Naive thymus-derived CD4-positive, alpha-beta T cell (primary cell): ENCODE measurements at regions of chr10 and their contacts with region 1.

Region 1: GRCh38 chr10:13099666-13100348 is at the start of gene OPTN:
- DNase-seq: peak; percentile 61 to 85 (median 80)
- ATAC-seq: peak; percentile 90
- H3K4me3 ChIP-seq: peak within 1 kb of the TSS; percentile 82
- H3K4me3 Mint-ChIP-seq: peak within 1 kb of the TSS; percentile 83 to 97 (median 96)
- H3K27ac ChIP-seq: peak within 1 kb of the TSS; percentile 92
- H3K27ac Mint-ChIP-seq: peak within 1 kb of the TSS; percentile 88 to 98 (median 94)
- H3K4me1 ChIP-seq: peaks cover 6 to 21% of the 10 kb centered on the region in 2 donors
- H3K4me1 Mint-ChIP-seq: peaks cover 28 to 52% (median 49%) of the 10 kb centered on the region in 7 donors
- H3K27me3 ChIP-seq: no peaks in the 10 kb centered on the region
- H3K27me3 Mint-ChIP-seq: no peaks in the 10 kb centered on the region
- total RNA-seq, gene OPTN: 59.3 to 146 (median 60.0) TPM

Region 2: GRCh38 chr10:12121673-12122072 is 978.1 kb before region 1 on chr10:
- CTCF ChIA-PET with region 1: no interaction called
- POLR2A ChIA-PET with region 1: no interaction called
- intact Hi-C with region 1: loop called in 1 of 2 experiments (anchors 2 kb)
- DNase-seq: no peak
- ATAC-seq: no peak
- H3K4me3 ChIP-seq: no peak overlapping the region
- H3K4me3 Mint-ChIP-seq: no peak overlapping the region
- H3K27ac ChIP-seq: no peak overlapping the region
- H3K27ac Mint-ChIP-seq: peak overlapping the region in 1 of 9 donors; percentile 86
- H3K4me1 ChIP-seq: no peaks in the 10 kb centered on the region
- H3K4me1 Mint-ChIP-seq: peaks cover 1 to 31% (median 7%) of the 10 kb centered on the region in 7 donors
- H3K27me3 ChIP-seq: no peaks in the 10 kb centered on the region
- H3K27me3 Mint-ChIP-seq: no peaks in the 10 kb centered on the region

Region 3: GRCh38 chr10:12264204-12264940 is 835.4 kb before region 1 on chr10:
- CTCF ChIA-PET with region 1: no interaction called
- POLR2A ChIA-PET with region 1: no interaction called
- intact Hi-C with region 1: loop called (anchors 2 to 10 kb)
- DNase-seq: peak; percentile 45 to 75 (median 67)
- ATAC-seq: peak; percentile 73
- H3K4me3 ChIP-seq: peak overlapping the region; percentile 45
- H3K4me3 Mint-ChIP-seq: peak overlapping the region; percentile 58 to 81 (median 72)
- H3K27ac ChIP-seq: no peak overlapping the region
- H3K27ac Mint-ChIP-seq: peak overlapping the region in 7 of 9 donors; percentile 10 to 87 (median 51)
- H3K4me1 ChIP-seq: no peaks in the 10 kb centered on the region
- H3K4me1 Mint-ChIP-seq: peaks cover 0 to 26% (median 5%) of the 10 kb centered on the region in 7 donors
- H3K27me3 ChIP-seq: no peaks in the 10 kb centered on the region
- H3K27me3 Mint-ChIP-seq: no peaks in the 10 kb centered on the region

Region 4: DNA sequence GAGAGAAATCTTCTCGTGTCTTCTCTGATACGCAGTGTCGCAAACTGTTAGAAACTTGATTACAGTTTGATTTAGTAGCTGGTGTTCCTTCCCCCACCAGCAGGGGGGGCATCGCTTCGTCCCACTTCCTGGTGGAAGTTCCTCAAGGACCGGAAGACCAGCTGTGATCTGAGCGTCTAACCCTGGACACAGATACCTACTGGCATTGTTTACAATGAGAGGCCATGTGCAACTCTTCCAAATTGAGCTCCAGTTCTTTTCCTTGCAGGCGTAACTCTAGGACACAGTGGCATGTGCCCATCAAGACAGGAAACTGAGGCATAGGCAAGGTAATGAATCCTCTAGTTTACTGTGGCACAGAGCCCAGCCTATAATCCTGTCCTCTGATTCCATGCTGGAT is 317.3 kb before region 1 on chr10:
- CTCF ChIA-PET with region 1: interaction called, 4 read pairs
- POLR2A ChIA-PET with region 1: no interaction called
- intact Hi-C with region 1: loop called in 1 of 2 experiments (anchors 1 kb)
- DNase-seq: peak in 4 of 9 donors; percentile 0 to 20 (median 4)
- ATAC-seq: no peak
- H3K4me3 ChIP-seq: no peak overlapping the region
- H3K4me3 Mint-ChIP-seq: no peak overlapping the region
- H3K27ac ChIP-seq: no peak overlapping the region
- H3K27ac Mint-ChIP-seq: peak overlapping the region in 1 of 9 donors; percentile 33
- H3K4me1 ChIP-seq: no peaks in the 10 kb centered on the region
- H3K4me1 Mint-ChIP-seq: peaks cover 0 to 6% (median 5%) of the 10 kb centered on the region in 7 donors
- H3K27me3 ChIP-seq: no peaks in the 10 kb centered on the region
- H3K27me3 Mint-ChIP-seq: no peaks in the 10 kb centered on the region

Region 5: DNA sequence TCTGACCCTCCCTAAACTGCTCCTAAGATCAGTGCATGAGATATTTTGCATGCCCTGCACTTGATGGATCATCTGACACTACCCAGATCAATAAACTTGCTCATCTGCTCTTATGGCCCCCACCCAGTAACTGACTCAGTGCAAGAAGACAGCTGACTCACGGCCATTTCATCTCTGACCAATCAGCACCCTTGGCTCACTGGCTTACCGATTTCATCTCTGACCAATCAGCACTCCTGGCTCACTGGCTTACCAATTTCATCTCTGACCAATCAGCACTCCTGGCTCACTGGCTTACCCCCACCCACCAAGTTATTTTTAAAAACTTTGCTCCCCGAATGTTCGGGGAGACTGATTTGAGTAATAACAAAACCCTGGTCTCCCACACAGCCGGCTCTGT is 37.0 kb before region 1 on chr10:
- CTCF ChIA-PET with region 1: no interaction called
- POLR2A ChIA-PET with region 1: no interaction called
- intact Hi-C with region 1: no loop called
- DNase-seq: no peak
- ATAC-seq: no peak
- H3K4me3 ChIP-seq: no peak overlapping the region
- H3K4me3 Mint-ChIP-seq: no peak overlapping the region
- H3K27ac ChIP-seq: no peak overlapping the region
- H3K27ac Mint-ChIP-seq: no peak overlapping the region
- H3K4me1 ChIP-seq: no peaks in the 10 kb centered on the region
- H3K4me1 Mint-ChIP-seq: no peaks in the 10 kb centered on the region
- H3K27me3 ChIP-seq: no peaks in the 10 kb centered on the region
- H3K27me3 Mint-ChIP-seq: peaks cover 0 to 20% (median 14%) of the 10 kb centered on the region in 5 donors

Region 6: DNA sequence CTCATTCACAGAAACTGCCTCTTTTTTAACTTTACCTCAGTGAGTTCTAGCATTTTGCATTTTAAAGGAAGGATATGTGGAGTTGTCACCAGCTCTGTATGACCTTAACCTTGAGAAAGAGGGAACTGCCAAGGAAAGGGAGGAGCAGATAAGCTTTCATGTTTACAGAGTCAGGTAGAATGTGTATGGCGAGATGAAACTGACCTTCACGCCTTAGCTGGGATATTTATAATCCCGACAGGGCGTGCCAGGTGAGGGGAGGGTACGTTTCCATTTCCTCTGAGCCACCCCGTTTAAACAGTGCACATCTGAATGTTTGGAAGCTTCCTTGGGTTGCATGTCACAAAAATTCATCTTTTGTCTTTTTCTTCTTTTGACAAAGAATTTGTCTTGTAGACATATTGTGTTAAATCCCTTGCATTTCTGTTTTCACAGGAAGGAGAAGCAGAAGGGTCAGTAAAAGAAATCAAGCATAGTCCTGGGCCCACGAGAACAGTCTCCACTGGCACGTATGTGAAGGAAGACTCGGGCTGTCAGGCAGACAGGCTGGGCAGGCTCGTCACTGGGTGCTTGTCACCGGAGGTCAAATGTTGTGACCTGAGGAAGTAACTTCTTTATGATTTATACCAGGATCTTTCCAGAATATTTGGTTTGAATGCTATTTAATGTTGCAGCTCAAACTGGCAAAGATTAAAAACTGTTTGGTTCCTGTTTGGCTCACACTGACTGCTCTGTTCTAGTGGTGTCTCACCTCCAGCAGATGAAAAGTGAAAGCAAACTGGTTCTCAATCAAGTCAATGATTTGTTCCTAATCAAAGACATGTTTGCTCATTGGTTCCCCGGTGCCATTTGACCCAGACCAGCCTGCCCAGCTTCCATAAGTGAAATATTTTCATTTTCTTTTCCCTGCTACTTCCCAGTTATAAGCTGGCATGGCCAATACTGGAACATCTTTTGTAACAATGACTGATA is 16.3 kb after region 1 on chr10:
- CTCF ChIA-PET with region 1: interaction called, 4 read pairs
- POLR2A ChIA-PET with region 1: no interaction called
- intact Hi-C with region 1: loop called in 1 of 2 experiments (anchors 2 kb)
- DNase-seq: peak in 1 of 9 donors; percentile 3
- ATAC-seq: peak; percentile 81
- H3K4me3 ChIP-seq: peak overlapping the region; percentile 8
- H3K4me3 Mint-ChIP-seq: peak overlapping the region in 6 of 10 donors; percentile 25 to 63 (median 54)
- H3K27ac ChIP-seq: peak overlapping the region; percentile 22
- H3K27ac Mint-ChIP-seq: peak overlapping the region; percentile 12 to 90 (median 67)
- H3K4me1 ChIP-seq: peaks cover 0 to 9% of the 10 kb centered on the region in 2 donors
- H3K4me1 Mint-ChIP-seq: peaks cover 0 to 34% (median 20%) of the 10 kb centered on the region in 7 donors
- H3K27me3 ChIP-seq: no peaks in the 10 kb centered on the region
- H3K27me3 Mint-ChIP-seq: no peaks in the 10 kb centered on the region

Region 7: GRCh38 chr10:13299437-13300287 is 199.9 kb after region 1 on chr10 and contains the start of gene PHYH:
- CTCF ChIA-PET with region 1: interaction called, 3 read pairs
- POLR2A ChIA-PET with region 1: interaction called, 11 read pairs
- intact Hi-C with region 1: loop called (anchors 1 kb)
- DNase-seq: peak; percentile 70 to 88 (median 78)
- ATAC-seq: peak; percentile 77
- H3K4me3 ChIP-seq: peak within 1 kb of the TSS; percentile 69
- H3K4me3 Mint-ChIP-seq: peak within 1 kb of the TSS; percentile 70 to 96 (median 86)
- H3K27ac ChIP-seq: peak within 1 kb of the TSS; percentile 95
- H3K27ac Mint-ChIP-seq: peak within 1 kb of the TSS; percentile 92 to 99 (median 97)
- H3K4me1 ChIP-seq: peaks cover 16 to 19% of the 10 kb centered on the region in 2 donors
- H3K4me1 Mint-ChIP-seq: peaks cover 13 to 34% (median 22%) of the 10 kb centered on the region in 7 donors
- H3K27me3 ChIP-seq: no peaks in the 10 kb centered on the region
- H3K27me3 Mint-ChIP-seq: no peaks in the 10 kb centered on the region
- total RNA-seq, gene PHYH: 11.2 to 17.7 (median 13.2) TPM